ENCODE measurements at regions of chr2 and their contacts with region 1.

Region 1: DNA sequence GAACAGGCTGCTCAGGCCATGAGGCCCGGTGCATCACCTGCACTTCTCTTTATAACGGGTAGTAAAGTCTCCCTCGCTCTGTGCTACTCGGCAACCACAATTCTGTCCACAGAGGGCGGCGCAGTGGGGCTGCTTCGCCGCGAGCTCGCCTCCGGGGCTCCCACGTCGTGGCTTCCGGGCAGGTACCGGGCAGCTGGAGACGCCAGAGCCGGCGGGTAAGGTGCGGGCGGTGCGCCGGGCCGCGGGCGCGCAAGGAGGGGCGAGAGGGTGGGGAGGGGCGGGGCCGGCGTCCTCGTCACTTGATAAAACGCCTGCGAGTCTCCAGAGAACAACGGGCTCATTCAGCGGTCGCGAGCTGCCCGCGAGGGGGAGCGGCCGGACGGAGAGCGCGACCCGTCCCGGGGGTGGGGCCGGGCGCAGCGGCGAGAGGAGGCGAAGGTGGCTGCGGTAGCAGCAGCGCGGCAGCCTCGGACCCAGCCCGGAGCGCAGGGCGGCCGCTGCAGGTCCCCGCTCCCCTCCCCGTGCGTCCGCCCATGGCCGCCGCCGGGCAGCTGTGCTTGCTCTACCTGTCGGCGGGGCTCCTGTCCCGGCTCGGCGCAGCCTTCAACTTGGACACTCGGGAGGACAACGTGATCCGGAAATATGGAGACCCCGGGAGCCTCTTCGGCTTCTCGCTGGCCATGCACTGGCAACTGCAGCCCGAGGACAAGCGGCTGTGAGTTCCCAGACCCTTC is at the start of gene ITGA6:
- DNase-seq: peak; percentile 42
- H3K4me3 Mint-ChIP-seq: peak within 1 kb of the TSS; percentile 67
- H3K27ac Mint-ChIP-seq: no peak within 1 kb of the TSS
- H3K4me1 Mint-ChIP-seq: peaks cover 11% of the 10 kb centered on the region
- H3K27me3 Mint-ChIP-seq: peaks cover 83% of the 10 kb centered on the region
- total RNA-seq, gene ITGA6: 0.11 and 0.25 TPM in 2 replicates

Region 2: GRCh38 chr2:171416009-171416926 is 1011.2 kb before region 1 on chr2:
- intact Hi-C with region 1: no loop called
- DNase-seq: peak; percentile 71
- H3K4me3 Mint-ChIP-seq: peak overlapping the region; percentile 9
- H3K27ac Mint-ChIP-seq: peak overlapping the region; percentile 91
- H3K4me1 Mint-ChIP-seq: peaks cover 34% of the 10 kb centered on the region
- H3K27me3 Mint-ChIP-seq: no peaks in the 10 kb centered on the region

Region 3: GRCh38 chr2:172084734-172085459 is 342.5 kb before region 1 on chr2:
- intact Hi-C with region 1: loop called (anchors 5 kb)
- DNase-seq: no peak
- H3K4me3 Mint-ChIP-seq: peak overlapping the region; percentile 75
- H3K27ac Mint-ChIP-seq: peak overlapping the region; percentile 58
- H3K4me1 Mint-ChIP-seq: peaks cover 33% of the 10 kb centered on the region
- H3K27me3 Mint-ChIP-seq: peaks cover 92% of the 10 kb centered on the region

Region 4: DNA sequence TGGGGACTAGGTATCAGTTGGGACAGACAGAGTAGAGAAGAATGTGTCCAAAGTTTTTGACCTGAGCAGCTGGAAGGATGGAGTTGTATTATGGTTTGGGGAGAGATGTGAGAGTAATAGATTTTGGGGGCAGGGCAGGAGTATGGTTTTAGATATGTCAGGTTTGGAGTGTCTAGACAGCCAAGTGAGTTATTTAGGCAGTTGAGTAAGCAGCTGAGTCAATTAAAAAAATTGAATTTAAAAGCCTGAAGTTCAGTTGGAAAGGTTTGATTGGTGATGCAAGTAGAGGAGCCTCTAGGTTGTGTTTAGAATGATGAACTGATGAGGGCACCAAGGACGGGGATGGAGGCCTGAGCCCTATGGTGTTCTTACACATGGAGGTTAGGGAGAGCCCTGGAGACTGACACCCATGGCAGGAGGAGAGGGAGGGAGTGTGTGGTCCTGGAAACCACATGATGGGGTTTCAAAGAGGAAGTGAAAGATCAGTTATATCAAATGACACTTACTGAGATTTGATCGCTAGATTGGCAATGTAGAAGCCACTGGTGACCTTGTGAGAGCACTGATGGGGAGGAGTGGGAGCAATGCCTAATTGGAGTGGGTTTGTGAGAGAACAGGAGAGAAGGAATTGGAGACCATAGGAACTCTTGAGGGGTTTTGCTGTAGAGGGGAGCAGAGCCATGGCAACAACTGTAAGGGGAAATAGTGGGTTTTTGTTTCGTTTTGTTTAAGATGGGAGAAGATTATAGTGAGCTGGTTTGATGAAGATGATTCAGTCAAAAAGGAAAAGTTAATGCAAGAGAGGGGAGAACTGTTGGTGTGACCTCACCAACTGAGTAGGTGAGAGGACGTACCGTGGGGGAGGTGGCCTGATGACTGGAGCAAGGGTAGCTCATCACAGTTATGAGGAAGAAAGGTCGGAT is 10.3 kb after region 1 on chr2:
- intact Hi-C with region 1: loop called (anchors 1 kb)
- DNase-seq: peak; percentile 27
- H3K4me3 Mint-ChIP-seq: no peak overlapping the region
- H3K27ac Mint-ChIP-seq: no peak overlapping the region
- H3K4me1 Mint-ChIP-seq: peaks cover 42% of the 10 kb centered on the region
- H3K27me3 Mint-ChIP-seq: peaks cover 43% of the 10 kb centered on the region

Measured in activated T-helper 2 cell treated with anti-CD3 and anti-CD28 coated beads, Interferon-gamma antibody, Interleukin-2, Interleukin-4, amounts not matched to agents 10 μg/mL and 5 μg/mL and 100 μg/mL, durations not matched to agents 14 hours and 24 hours and 36 hours (primary cell).